K562 (cell line): ENCODE measurements at regions of chr1 and their contacts with region 1.

Region 1: GRCh38 chr1:236875975-236876374 is 80.9 kb downstream of the MTR start:
- DNase-seq: no peak
- ATAC-seq: no peak
- H3K4me3 ChIP-seq: no peak overlapping the region
- H3K27ac ChIP-seq: no peak overlapping the region
- H3K4me1 ChIP-seq: no peaks in the 10 kb centered on the region
- H3K27me3 ChIP-seq: no peaks in the 10 kb centered on the region
- CTCF ChIP-seq: no peak
- EP300 ChIP-seq: no peak
- POLR2A ChIP-seq: no peak
- RAD21 ChIP-seq: no peak

Region 2: GRCh38 chr1:237197470-237198425 is 321.8 kb after region 1 on chr1:
- CTCF ChIA-PET with region 1: no interaction called
- POLR2A ChIA-PET with region 1: no interaction called
- in situ Hi-C with region 1: no loop called
- intact Hi-C with region 1: no loop called
- DNase-seq: no peak
- ATAC-seq: no peak
- H3K4me3 ChIP-seq: no peak overlapping the region
- H3K27ac ChIP-seq: no peak overlapping the region
- H3K4me1 ChIP-seq: no peaks in the 10 kb centered on the region
- H3K27me3 ChIP-seq: no peaks in the 10 kb centered on the region
- CTCF ChIP-seq: no peak
- EP300 ChIP-seq: no peak
- POLR2A ChIP-seq: no peak
- RAD21 ChIP-seq: no peak

Region 3: DNA sequence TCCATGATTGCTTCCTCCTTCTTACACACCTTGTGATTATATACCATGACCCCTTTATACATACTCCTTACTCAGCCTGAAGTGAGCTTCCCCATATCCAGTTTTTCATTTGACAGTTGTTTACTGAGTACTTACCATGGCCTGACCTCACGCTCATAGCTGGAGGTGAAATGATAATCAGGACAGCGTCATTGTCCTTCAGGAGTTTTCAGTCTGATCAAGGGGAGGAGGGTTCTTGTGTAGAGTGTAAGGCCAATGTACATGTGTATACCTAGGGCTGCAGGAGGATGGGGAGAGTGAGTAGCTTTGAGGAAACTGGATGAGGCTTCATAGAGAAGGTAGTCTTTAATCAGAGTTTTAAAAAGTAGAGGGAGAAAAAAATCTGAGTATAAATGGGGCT is 491.8 kb after region 1 on chr1:
- CTCF ChIA-PET with region 1: no interaction called
- POLR2A ChIA-PET with region 1: no interaction called
- in situ Hi-C with region 1: no loop called
- intact Hi-C with region 1: loop called (anchors 5 kb)
- DNase-seq: no peak
- ATAC-seq: no peak
- H3K4me3 ChIP-seq: no peak overlapping the region
- H3K27ac ChIP-seq: no peak overlapping the region
- H3K4me1 ChIP-seq: no peaks in the 10 kb centered on the region
- H3K27me3 ChIP-seq: no peaks in the 10 kb centered on the region
- CTCF ChIP-seq: no peak
- EP300 ChIP-seq: no peak
- POLR2A ChIP-seq: no peak
- RAD21 ChIP-seq: no peak